ENCODE measurements at regions of chr7 and their contacts with region 1.

Region 1: DNA sequence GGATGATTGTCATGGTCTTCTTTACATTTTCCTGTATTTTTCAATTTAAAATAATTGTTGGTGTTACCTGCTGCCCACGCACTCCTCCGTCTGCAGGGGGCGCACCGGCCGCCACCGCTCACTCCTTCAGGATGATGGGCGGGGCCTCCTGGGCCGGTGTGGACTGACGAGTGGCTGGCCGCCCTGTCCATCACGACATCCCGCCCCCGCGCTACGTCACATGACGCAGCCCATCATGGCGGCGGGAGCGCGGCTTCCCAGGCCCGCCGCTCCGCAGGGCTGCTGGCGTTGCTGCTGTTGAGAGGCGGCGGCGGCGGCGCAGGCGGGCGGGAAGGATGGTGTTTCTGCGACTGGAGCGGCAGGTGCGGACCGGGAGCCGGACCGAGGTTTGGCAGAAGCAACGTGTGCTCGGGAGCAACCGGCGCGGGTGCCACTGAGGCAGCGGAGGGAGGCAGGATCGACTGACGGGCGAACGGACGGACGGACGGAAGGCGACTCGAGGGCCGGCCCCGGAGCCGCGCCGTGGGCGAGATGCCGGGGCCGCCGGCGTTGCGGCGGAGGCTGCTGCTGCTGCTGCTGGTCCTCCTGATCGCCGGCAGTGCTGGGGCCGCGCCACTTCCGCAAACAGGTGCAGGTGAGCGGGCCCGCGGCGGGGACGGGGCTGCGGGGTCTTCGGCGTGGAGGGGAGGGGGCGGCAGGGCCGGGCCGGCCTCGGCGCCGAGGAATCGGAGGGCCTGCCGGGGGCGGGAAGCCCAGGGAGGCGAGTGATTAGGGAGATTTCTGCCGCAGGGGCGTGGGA is at the start of gene LMTK2:
- DNase-seq: peak; percentile 96
- H3K4me3 Mint-ChIP-seq: peak within 1 kb of the TSS; percentile 98
- H3K27ac Mint-ChIP-seq: peak within 1 kb of the TSS; percentile 82
- H3K4me1 Mint-ChIP-seq: peaks cover 21% of the 10 kb centered on the region
- H3K27me3 Mint-ChIP-seq: peaks cover 1% of the 10 kb centered on the region
- total RNA-seq, gene LMTK2: 10.0 to 11.6 TPM

Region 2: DNA sequence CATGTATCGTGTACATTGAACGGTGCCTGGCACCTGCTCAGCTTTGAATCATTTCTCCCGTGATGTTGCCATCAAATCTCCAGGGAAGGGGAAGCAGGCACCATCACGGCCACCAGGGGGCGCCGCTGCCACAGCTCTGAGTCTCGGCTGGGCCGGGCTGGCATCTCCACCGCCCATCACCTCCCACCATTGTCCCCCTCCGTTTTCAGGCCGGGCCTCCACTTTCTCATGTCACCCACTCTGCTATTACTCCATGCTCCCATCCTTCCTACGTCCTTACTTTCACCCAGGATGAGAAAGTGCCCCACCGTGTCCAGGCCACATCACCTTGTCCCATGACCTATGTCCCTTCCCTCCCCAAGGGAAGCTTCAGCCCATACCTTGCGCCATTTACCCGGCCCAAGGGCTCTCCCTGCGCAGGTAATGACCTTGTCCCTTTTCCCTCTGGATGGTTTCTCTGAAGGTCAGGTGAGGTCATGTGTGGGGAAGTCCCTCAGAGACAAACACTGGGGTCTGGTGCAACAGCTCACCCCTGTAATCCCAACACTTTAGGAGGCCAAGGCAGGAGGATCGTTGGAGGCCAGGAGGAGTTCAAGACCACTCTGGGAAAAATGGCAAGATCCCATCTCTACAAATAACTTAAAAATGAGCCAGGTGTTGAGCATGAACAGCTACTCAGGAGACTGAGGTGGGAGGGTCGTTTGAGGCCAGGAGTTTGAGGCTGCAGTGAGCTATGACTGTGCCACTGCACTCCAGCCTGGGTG is 85.1 kb before region 1 on chr7:
- CTCF ChIA-PET with region 1: interaction called, 13 read pairs
- POLR2A ChIA-PET with region 1: no interaction called
- DNase-seq: peak; percentile 79
- H3K4me3 Mint-ChIP-seq: no peak overlapping the region
- H3K27ac Mint-ChIP-seq: no peak overlapping the region
- H3K4me1 Mint-ChIP-seq: peaks cover 5% of the 10 kb centered on the region
- H3K27me3 Mint-ChIP-seq: peaks cover 4% of the 10 kb centered on the region

Region 3: DNA sequence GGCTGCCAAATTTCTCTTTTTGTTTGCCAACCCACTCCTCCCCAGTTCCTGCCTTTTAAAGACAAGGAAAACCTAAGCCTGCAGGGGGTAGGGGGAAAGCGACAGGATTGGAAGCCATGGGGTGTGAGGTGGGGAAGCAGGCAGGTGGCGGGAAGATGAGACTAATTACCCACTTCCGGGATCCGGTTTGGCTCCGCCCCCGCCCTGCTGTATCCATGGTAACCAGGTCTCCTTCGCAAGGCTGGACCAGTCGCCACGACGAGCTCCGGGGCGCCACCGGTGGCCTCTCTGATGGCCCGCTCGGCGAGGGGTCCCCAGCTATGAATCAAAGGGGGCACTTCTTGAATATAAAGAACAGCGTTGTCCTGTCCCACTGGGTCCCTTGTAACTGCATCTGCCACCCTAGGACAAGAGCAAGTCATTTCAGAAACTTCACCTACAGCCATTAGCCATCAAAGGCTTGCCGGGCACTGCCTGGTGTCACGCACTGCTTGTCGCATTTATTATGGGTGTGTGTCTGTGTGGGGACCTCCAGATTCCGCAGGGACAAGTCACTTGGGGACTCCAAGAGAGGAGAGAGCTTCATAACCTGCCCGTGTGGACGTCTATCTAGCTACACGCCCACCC is 55.6 kb before region 1 on chr7:
- CTCF ChIA-PET with region 1: no interaction called
- POLR2A ChIA-PET with region 1: no interaction called
- DNase-seq: peak; percentile 43
- H3K4me3 Mint-ChIP-seq: no peak overlapping the region
- H3K27ac Mint-ChIP-seq: no peak overlapping the region
- H3K4me1 Mint-ChIP-seq: peaks cover 10% of the 10 kb centered on the region
- H3K27me3 Mint-ChIP-seq: peaks cover 2% of the 10 kb centered on the region

Region 4: GRCh38 chr7:98086281-98086718 is 20.5 kb before region 1 on chr7:
- CTCF ChIA-PET with region 1: no interaction called
- POLR2A ChIA-PET with region 1: no interaction called
- DNase-seq: no peak
- H3K4me3 Mint-ChIP-seq: no peak overlapping the region
- H3K27ac Mint-ChIP-seq: no peak overlapping the region
- H3K4me1 Mint-ChIP-seq: no peaks in the 10 kb centered on the region
- H3K27me3 Mint-ChIP-seq: peaks cover 3% of the 10 kb centered on the region

Region 5: GRCh38 chr7:98119256-98119918 is 12.5 kb after region 1 on chr7:
- CTCF ChIA-PET with region 1: interaction called, 10 read pairs
- POLR2A ChIA-PET with region 1: interaction called, 5 read pairs
- DNase-seq: no peak
- H3K4me3 Mint-ChIP-seq: no peak overlapping the region
- H3K27ac Mint-ChIP-seq: no peak overlapping the region
- H3K4me1 Mint-ChIP-seq: no peaks in the 10 kb centered on the region
- H3K27me3 Mint-ChIP-seq: no peaks in the 10 kb centered on the region

Region 6: GRCh38 chr7:98133181-98133580 is 26.3 kb after region 1 on chr7:
- CTCF ChIA-PET with region 1: interaction called, 9 read pairs
- POLR2A ChIA-PET with region 1: interaction called, 18 read pairs
- DNase-seq: peak; percentile 26
- H3K4me3 Mint-ChIP-seq: peak overlapping the region; percentile 33
- H3K27ac Mint-ChIP-seq: no peak overlapping the region
- H3K4me1 Mint-ChIP-seq: peaks cover 42% of the 10 kb centered on the region
- H3K27me3 Mint-ChIP-seq: peaks cover 8% of the 10 kb centered on the region

Region 7: DNA sequence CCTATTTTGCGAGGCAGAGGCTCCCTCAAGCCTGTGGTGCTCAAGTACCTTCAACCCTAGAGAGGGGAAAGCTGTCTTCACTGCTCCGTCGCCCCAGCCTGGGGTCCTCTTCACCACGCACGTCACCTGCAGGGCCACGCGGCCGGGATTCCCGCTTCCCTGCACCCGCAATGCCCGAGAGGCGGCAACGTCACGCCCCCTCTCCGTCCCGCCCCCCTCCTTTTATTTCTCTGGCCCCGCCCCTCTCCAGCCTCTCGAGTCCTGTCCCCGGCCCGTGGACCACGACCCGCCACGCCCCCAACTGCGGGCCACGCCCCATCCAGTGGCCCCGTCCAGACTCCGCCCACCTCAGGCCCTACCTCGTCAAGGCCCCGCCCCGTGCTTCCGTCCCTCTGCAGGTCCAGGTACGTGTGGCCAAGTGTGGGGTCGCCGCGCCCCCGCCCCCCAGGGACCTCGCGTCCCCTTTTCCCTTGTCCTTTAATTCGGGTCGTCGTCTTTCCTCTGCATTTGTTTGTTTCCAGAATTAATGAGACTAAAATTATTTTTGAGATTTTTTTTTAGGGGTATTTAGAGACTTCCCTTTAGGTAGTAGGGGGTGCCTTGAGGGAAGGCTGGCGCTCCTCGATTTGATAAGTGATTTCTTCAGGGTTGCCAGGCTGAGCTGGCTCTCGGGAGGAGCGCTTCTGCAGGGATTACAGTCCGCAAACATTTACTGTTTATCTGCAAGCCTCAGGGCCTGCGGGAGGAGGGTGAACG is 363.8 kb after region 1 on chr7:
- CTCF ChIA-PET with region 1: no interaction called
- POLR2A ChIA-PET with region 1: no interaction called
- DNase-seq: no peak
- H3K4me3 Mint-ChIP-seq: no peak overlapping the region
- H3K27ac Mint-ChIP-seq: no peak overlapping the region
- H3K4me1 Mint-ChIP-seq: no peaks in the 10 kb centered on the region
- H3K27me3 Mint-ChIP-seq: peaks cover 3% of the 10 kb centered on the region